Transverse colon (tissue), 4 donors: ENCODE measurements at regions of chr2 and their contacts with region 1.

Region 1: DNA sequence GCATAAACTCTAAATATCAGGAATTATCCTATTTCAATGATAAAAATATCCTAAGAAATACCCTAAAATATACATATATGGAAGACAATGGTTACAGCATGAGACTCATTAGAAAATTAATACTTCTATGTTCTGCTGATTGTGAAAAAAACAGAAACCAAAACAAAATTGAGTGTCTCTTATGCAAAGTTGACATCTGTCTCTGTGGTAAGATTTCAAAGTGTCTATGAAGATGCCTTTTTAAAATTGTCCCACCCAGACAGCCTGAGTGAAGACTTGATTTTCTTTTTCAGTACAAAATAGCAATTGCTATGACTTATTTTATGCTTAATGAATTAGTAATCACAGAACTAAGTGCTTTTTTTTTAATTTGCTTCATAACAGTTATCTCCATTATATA is 1368.4 kb upstream of the LRRTM1 start:
- DNase-seq: no peak
- H3K4me3 ChIP-seq: no peak overlapping the region
- H3K27ac ChIP-seq: no peak overlapping the region
- H3K4me1 ChIP-seq: no peaks in the 10 kb centered on the region
- H3K27me3 ChIP-seq: no peaks in the 10 kb centered on the region
- CTCF ChIP-seq: no peak
- EP300 ChIP-seq: no peak
- POLR2A ChIP-seq: no peak

Region 2: GRCh38 chr2:81583311-81584108 is 89.4 kb before region 1 on chr2:
- in situ Hi-C with region 1: no loop called
- intact Hi-C with region 1: no loop called
- DNase-seq: no peak
- H3K4me3 ChIP-seq: no peak overlapping the region
- H3K27ac ChIP-seq: no peak overlapping the region
- H3K4me1 ChIP-seq: no peaks in the 10 kb centered on the region
- H3K27me3 ChIP-seq: no peaks in the 10 kb centered on the region
- CTCF ChIP-seq: no peak
- EP300 ChIP-seq: no peak
- POLR2A ChIP-seq: no peak

Region 3: DNA sequence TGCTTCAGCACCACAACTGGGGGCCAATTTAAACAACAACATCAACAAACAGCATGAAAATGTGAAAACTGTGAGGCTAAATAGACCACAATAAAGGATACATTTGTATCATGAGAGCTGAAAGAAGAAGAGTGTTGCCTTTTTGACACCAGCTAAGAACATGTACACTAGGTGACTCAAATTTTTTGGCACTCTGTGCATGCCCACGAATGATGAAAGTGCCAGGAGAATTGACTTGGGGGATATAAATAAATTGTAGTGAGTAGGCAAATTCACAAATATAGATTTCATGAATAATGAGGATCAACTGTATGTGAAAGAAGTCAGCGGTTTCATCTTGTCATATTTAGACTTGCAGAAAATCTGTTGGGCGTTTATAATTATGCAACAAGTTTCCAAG is 19.6 kb after region 1 on chr2:
- in situ Hi-C with region 1: no loop called
- intact Hi-C with region 1: loop called (anchors 1 kb)
- DNase-seq: no peak
- H3K4me3 ChIP-seq: no peak overlapping the region
- H3K27ac ChIP-seq: no peak overlapping the region
- H3K4me1 ChIP-seq: no peaks in the 10 kb centered on the region
- H3K27me3 ChIP-seq: no peaks in the 10 kb centered on the region
- CTCF ChIP-seq: no peak
- EP300 ChIP-seq: no peak
- POLR2A ChIP-seq: no peak